Naive thymus-derived CD4-positive, alpha-beta T cell (primary cell): ENCODE measurements at regions of chr20 and their contacts with region 1.

Region 1: DNA sequence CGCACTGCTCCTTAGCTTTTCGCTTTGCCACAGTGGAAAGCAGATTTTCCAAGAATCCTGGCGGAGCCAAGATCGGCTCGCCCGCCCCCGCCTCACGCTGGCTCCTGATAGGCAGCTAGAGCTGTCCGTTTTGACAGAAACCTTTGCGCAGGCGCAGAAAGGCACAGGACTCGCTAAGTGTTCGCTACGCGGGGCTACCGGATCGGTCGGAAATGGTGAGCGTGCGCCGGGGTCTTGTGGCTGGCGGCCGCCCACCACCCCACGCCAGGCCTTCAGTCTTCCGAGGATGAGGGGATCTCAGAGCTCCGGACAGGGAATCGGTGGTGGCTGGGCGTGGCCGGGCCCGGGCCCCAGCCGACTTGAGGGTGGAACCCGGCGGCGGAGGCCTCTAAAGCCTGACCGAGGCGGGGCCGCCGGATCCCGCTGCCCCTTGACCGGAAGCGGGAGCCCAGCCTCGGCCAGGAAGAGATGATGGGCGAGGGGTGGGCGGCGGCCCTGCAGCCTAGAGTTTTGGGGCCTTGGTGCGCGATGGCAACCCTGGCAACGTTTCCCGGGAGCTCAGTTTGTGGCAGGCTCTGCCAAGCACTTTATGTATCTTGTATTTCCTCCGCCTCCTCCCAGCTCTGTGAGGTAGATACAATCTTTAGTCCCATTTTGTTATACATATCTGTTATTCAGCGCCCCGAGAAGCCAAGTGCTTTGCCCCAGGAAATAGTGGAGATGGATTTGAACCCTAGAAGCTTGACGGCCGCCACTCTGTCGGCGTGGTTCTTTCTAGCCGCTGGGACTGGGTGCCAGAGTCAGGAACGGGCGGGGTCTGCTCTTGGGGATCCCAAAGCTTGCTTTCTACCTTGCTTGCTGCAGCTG is at the start of gene DYNLRB1:
- DNase-seq: peak; percentile 87 to 94 (median 92)
- ATAC-seq: peak; percentile 88
- H3K4me3 ChIP-seq: peak within 1 kb of the TSS; percentile 96
- H3K4me3 Mint-ChIP-seq: peak within 1 kb of the TSS; percentile 97 to 100 (median 99)
- H3K27ac ChIP-seq: peak within 1 kb of the TSS; percentile 86
- H3K27ac Mint-ChIP-seq: peak within 1 kb of the TSS; percentile 94 to 99 (median 97)
- H3K4me1 ChIP-seq: peaks cover 8 to 11% of the 10 kb centered on the region in 2 donors
- H3K4me1 Mint-ChIP-seq: peaks cover 12 to 59% (median 51%) of the 10 kb centered on the region in 7 donors
- H3K27me3 ChIP-seq: no peaks in the 10 kb centered on the region
- H3K27me3 Mint-ChIP-seq: no peaks in the 10 kb centered on the region
- total RNA-seq, gene DYNLRB1: 45.9 to 91.9 (median 60.7) TPM

Region 2: DNA sequence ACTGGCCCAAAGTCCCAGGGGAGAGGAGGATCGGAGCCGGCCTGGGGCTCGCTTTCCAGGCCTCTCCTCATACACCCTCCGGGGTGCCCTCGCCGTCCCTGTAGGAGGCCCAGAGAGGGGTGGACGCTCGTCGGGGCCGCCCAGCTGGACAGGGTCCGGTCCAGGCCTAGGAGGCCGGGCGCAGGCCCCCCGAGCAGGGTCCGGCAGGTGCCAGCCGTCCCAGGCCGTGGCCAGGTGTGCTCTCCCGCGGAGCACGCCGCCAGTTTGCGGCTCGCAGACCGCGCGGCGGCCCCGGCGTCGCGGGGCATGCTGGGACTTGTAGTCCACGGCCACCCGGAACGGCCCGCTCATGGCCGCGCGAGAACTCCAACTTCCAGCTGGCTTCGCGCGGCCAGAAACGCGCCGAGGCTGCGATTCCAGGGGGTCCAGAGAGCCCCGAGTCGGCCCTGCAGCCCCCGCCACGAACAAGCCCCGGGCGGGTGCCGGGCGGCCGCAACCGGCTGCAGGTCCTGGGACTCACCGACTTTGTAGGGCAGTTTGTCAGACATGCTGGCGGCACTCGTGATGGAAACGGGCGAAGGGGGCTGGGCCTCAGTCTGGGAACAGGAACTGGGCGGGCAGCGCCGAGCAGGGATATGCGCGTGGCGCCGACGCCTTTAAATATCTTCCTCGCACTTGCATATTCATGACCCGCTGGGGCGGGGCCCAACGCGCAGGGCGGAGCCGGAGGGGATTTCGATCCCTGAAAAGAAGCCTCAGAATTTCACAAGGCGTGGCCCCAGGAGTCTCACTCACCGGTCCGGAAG is 213.6 kb before region 1 on chr20 and contains the start of gene AHCY:
- CTCF ChIA-PET with region 1: no interaction called
- POLR2A ChIA-PET with region 1: interaction called, 16 read pairs
- intact Hi-C with region 1: loop called (anchors 1 kb)
- DNase-seq: peak; percentile 84 to 95 (median 92)
- ATAC-seq: peak; percentile 96
- H3K4me3 ChIP-seq: peak within 1 kb of the TSS; percentile 91
- H3K4me3 Mint-ChIP-seq: peak within 1 kb of the TSS; percentile 90 to 96 (median 91)
- H3K27ac ChIP-seq: peak within 1 kb of the TSS; percentile 87
- H3K27ac Mint-ChIP-seq: peak within 1 kb of the TSS; percentile 89 to 95 (median 93)
- H3K4me1 ChIP-seq: peaks cover 3 to 6% of the 10 kb centered on the region in 2 donors
- H3K4me1 Mint-ChIP-seq: peaks cover 0 to 27% (median 14%) of the 10 kb centered on the region in 7 donors
- H3K27me3 ChIP-seq: no peaks in the 10 kb centered on the region
- H3K27me3 Mint-ChIP-seq: peaks cover 0 to 2% (median 0%) of the 10 kb centered on the region in 5 donors
- total RNA-seq, gene AHCY: 19.1 to 62.9 (median 23.7) TPM

Region 3: GRCh38 chr20:34538671-34539123 is 22.2 kb after region 1 on chr20:
- CTCF ChIA-PET with region 1: no interaction called
- POLR2A ChIA-PET with region 1: interaction called, 4 read pairs
- intact Hi-C with region 1: loop called in 1 of 2 experiments (anchors 2 kb)
- DNase-seq: peak in 6 of 9 donors; percentile 23 to 62 (median 34)
- ATAC-seq: peak; percentile 74
- H3K4me3 ChIP-seq: no peak overlapping the region
- H3K4me3 Mint-ChIP-seq: no peak overlapping the region
- H3K27ac ChIP-seq: no peak overlapping the region
- H3K27ac Mint-ChIP-seq: peak overlapping the region in 2 of 9 donors; percentile 33 to 59
- H3K4me1 ChIP-seq: peaks cover 0 to 21% of the 10 kb centered on the region in 2 donors
- H3K4me1 Mint-ChIP-seq: peaks cover 0 to 24% (median 11%) of the 10 kb centered on the region in 7 donors
- H3K27me3 ChIP-seq: no peaks in the 10 kb centered on the region
- H3K27me3 Mint-ChIP-seq: no peaks in the 10 kb centered on the region

Region 4: GRCh38 chr20:34558320-34559218 is 42.1 kb after region 1 on chr20 and contains the start of gene MAP1LC3A:
- CTCF ChIA-PET with region 1: interaction called, 3 read pairs
- POLR2A ChIA-PET with region 1: interaction called, 3 read pairs
- intact Hi-C with region 1: loop called (anchors 1 kb)
- DNase-seq: peak; percentile 87 to 96 (median 89)
- ATAC-seq: peak; percentile 94
- H3K4me3 ChIP-seq: peak within 1 kb of the TSS; percentile 70
- H3K4me3 Mint-ChIP-seq: peak within 1 kb of the TSS; percentile 69 to 90 (median 85)
- H3K27ac ChIP-seq: peak within 1 kb of the TSS; percentile 97
- H3K27ac Mint-ChIP-seq: peak within 1 kb of the TSS; percentile 78 to 95 (median 88)
- H3K4me1 ChIP-seq: peaks cover 4 to 8% of the 10 kb centered on the region in 2 donors
- H3K4me1 Mint-ChIP-seq: peaks cover 8 to 14% (median 13%) of the 10 kb centered on the region in 7 donors
- H3K27me3 ChIP-seq: no peaks in the 10 kb centered on the region
- H3K27me3 Mint-ChIP-seq: no peaks in the 10 kb centered on the region
- total RNA-seq, gene MAP1LC3A: 0.60 to 10.3 (median 6.3) TPM

Region 5: DNA sequence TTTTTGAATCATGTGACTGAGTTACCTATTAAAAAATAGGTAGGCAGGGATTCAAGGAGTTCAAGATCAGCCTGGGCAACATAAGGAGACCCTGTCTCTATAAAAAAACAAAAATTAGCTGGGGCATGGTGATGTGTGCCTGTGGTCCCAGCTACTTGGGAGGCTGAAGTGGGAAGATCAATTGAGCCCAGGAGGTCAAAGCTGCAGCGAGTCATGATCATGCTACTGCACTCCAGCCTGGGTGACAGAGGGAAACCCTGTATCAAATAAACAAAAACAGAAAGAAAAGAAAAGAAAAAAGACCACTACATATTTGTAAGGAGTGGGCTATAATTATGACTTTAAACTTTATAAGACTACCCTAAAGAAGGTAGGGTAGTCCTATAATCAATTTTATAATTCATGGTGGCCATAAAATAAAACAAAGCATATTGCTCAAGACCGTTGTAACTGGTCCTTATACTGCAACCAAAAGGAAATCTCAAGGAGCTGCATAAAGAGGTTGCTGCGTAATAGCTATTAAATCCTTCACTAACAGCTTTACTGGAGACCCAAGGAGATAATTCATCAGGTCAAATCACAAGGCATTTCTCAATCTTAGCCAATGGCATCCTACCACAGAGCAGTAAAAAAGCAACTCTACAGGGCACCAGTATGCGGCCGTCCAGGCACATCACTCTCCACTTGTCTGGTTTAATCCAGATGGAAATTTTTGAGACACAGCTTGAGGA is 146.9 kb after region 1 on chr20:
- CTCF ChIA-PET with region 1: no interaction called
- POLR2A ChIA-PET with region 1: no interaction called
- intact Hi-C with region 1: no loop called
- DNase-seq: no peak
- ATAC-seq: no peak
- H3K4me3 ChIP-seq: no peak overlapping the region
- H3K4me3 Mint-ChIP-seq: no peak overlapping the region
- H3K27ac ChIP-seq: no peak overlapping the region
- H3K27ac Mint-ChIP-seq: no peak overlapping the region
- H3K4me1 ChIP-seq: no peaks in the 10 kb centered on the region
- H3K4me1 Mint-ChIP-seq: peaks cover 0 to 10% (median 5%) of the 10 kb centered on the region in 7 donors
- H3K27me3 ChIP-seq: no peaks in the 10 kb centered on the region
- H3K27me3 Mint-ChIP-seq: no peaks in the 10 kb centered on the region

Region 6: DNA sequence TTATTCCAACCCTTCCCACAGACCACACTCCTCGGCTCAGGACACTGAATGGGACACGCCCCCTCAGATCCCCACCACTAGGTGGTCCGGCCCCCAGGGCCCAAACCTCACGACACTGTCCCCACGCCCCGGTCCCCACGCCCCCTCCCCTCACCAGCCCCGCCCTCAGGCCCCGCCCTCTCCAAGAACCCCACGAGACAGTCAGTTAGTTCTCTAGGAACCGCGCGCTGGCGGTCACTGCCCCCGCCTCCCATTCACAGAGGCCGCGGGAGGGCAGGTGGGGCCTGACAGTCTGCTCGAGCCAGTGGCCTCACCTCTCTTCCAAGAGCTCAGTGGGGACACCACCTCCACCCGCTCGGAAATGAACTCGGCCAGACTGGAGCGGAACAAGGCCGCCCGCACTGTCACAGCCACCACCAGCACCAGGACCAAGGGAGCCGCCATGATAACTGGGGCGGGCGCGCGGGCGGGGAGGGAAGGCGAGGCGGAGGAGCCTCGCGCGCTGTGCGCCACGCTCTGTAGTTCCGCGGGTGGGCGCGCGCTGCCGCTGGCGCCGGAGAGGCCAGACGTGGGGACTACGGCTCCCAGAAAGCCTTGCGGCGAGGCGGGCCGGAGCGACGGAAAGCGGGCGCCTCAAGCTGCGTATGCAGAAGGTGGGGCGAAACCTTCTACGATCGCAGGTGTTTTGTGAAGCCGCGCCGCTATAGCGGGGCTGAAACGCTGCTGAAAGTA is 160.3 kb after region 1 on chr20 and contains the start of gene PIGU:
- CTCF ChIA-PET with region 1: no interaction called
- POLR2A ChIA-PET with region 1: no interaction called
- intact Hi-C with region 1: loop called (anchors 1 kb)
- DNase-seq: peak; percentile 88 to 97 (median 96)
- ATAC-seq: peak; percentile 99
- H3K4me3 ChIP-seq: peak within 1 kb of the TSS; percentile 63
- H3K4me3 Mint-ChIP-seq: peak within 1 kb of the TSS; percentile 95 to 99 (median 96)
- H3K27ac ChIP-seq: peak within 1 kb of the TSS; percentile 95
- H3K27ac Mint-ChIP-seq: peak within 1 kb of the TSS; percentile 85 to 98 (median 97)
- H3K4me1 ChIP-seq: peaks cover 4 to 5% of the 10 kb centered on the region in 2 donors
- H3K4me1 Mint-ChIP-seq: peaks cover 14 to 37% (median 24%) of the 10 kb centered on the region in 7 donors
- H3K27me3 ChIP-seq: no peaks in the 10 kb centered on the region
- H3K27me3 Mint-ChIP-seq: no peaks in the 10 kb centered on the region
- total RNA-seq, gene PIGU: 8.6 to 21.3 (median 16.1) TPM

Region 7: DNA sequence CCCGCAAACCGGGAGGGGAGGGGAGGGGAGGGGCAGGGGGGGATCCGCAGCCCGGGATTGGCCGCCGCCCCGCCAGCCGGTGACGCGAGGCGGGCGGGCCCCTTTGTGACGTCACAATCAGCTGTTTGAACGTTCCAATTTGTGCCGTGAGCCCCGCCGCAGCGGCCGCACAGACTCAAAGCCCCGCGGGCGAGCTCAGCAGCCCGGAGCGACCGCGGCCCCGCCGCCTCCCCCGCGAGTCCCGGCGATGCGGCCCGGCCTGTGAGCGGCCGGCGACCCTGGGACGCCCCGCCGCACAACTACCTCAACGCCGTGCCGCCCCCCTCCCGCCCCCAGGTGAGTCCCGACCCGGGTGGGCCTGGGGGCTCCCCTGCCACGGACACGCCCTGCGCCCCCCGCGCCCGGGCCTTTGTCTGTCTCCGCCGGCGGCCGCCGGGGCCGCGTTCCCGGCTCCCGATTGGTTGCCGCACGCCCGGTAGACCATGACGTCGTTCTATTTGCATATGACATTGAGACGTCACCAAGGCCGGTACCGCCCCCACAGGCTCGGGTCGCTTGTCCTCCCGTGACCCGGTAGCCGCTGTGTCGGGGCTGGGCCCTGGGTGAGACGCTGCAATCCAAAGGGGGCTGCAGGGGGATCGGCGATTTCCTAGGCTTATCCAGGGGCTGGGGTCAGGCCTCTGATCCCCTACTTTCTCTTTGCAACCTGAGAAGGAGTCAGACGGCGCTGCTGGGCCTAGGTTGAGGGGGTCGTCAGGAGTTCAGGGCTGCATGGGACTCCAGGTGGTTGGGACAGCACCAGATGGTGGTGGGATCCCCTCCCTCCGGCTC is 187.9 kb after region 1 on chr20 and contains the start of gene TP53INP2:
- CTCF ChIA-PET with region 1: interaction called, 3 read pairs
- POLR2A ChIA-PET with region 1: interaction called, 3 read pairs
- intact Hi-C with region 1: loop called (anchors 1 kb)
- DNase-seq: peak; percentile 82 to 93 (median 87)
- ATAC-seq: peak; percentile 78
- H3K4me3 ChIP-seq: peak within 1 kb of the TSS; percentile 59
- H3K4me3 Mint-ChIP-seq: peak within 1 kb of the TSS; percentile 91 to 98 (median 94)
- H3K27ac ChIP-seq: peak within 1 kb of the TSS; percentile 94
- H3K27ac Mint-ChIP-seq: peak within 1 kb of the TSS; percentile 79 to 100 (median 97)
- H3K4me1 ChIP-seq: peaks cover 6 to 7% of the 10 kb centered on the region in 2 donors
- H3K4me1 Mint-ChIP-seq: peaks cover 15 to 39% (median 25%) of the 10 kb centered on the region in 7 donors
- H3K27me3 ChIP-seq: no peaks in the 10 kb centered on the region
- H3K27me3 Mint-ChIP-seq: peaks cover 0 to 25% (median 6%) of the 10 kb centered on the region in 5 donors
- total RNA-seq, gene TP53INP2: 1.2 to 41.4 (median 1.5) TPM